Caco-2 (cell line): ENCODE measurements at regions of chr11 and their contacts with region 1.

Region 1: GRCh38 chr11:10792398-10792975 is 16.2 kb downstream of the EIF4G2 start:
- DNase-seq: peak; percentile 93 to 96
- H3K4me3 ChIP-seq: no peak overlapping the region
- H3K4me3 Mint-ChIP-seq: peak overlapping the region; percentile 10
- H3K27ac Mint-ChIP-seq: no peak overlapping the region
- H3K4me1 ChIP-seq: no peaks in the 10 kb centered on the region
- H3K4me1 Mint-ChIP-seq: peaks cover 6% of the 10 kb centered on the region
- H3K27me3 ChIP-seq: no peaks in the 10 kb centered on the region
- H3K27me3 Mint-ChIP-seq: no peaks in the 10 kb centered on the region
- CTCF ChIP-seq: peak; percentile 94 to 99

Region 2: GRCh38 chr11:10750838-10751580 is 41.5 kb before region 1 on chr11 and contains the start of gene CTR9:
- CTCF ChIA-PET with region 1: interaction called, 3 read pairs
- POLR2A ChIA-PET with region 1: interaction called, 3 read pairs
- intact Hi-C with region 1: loop called (anchors 1 kb)
- DNase-seq: peak; percentile 96 to 97
- H3K4me3 ChIP-seq: peak within 1 kb of the TSS; percentile 70
- H3K4me3 Mint-ChIP-seq: peak within 1 kb of the TSS; percentile 91
- H3K27ac Mint-ChIP-seq: peak within 1 kb of the TSS; percentile 90
- H3K4me1 ChIP-seq: peaks cover 13% of the 10 kb centered on the region; the same call in 1 of the 2 replicates
- H3K4me1 Mint-ChIP-seq: peaks cover 6% of the 10 kb centered on the region
- H3K27me3 ChIP-seq: no peaks in the 10 kb centered on the region
- H3K27me3 Mint-ChIP-seq: no peaks in the 10 kb centered on the region
- CTCF ChIP-seq: peak in 1 of 2 experiments; percentile 50
- total RNA-seq, gene CTR9: 51.1 and 54.0 TPM in 2 replicates

Region 3: GRCh38 chr11:10770626-10771254 is 21.7 kb before region 1 on chr11:
- CTCF ChIA-PET with region 1: interaction called, 12 read pairs
- POLR2A ChIA-PET with region 1: no interaction called
- intact Hi-C with region 1: no loop called
- DNase-seq: peak; percentile 59 to 60
- H3K4me3 ChIP-seq: no peak overlapping the region
- H3K4me3 Mint-ChIP-seq: no peak overlapping the region
- H3K27ac Mint-ChIP-seq: no peak overlapping the region
- H3K4me1 ChIP-seq: no peaks in the 10 kb centered on the region
- H3K4me1 Mint-ChIP-seq: no peaks in the 10 kb centered on the region
- H3K27me3 ChIP-seq: no peaks in the 10 kb centered on the region
- H3K27me3 Mint-ChIP-seq: no peaks in the 10 kb centered on the region
- CTCF ChIP-seq: peak; percentile 79 to 86

Region 4: DNA sequence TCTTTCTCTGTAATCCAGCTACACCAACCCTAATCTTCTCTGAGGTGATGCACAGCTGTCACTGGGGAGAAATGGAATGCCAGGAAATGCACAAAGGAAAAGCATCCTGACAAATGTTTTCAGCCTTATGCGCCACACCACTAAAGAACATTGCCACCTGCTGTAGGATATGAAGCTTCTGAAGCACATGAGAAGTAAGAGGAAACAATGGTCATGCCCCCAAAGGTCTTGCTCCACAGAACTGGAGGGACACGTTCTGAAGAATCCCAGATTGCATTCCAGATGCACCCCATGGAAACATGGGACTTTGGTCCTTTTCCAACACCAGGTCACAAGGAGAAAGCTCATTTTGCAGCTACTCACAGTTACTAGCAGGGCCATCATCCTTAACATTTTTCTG is 114.0 kb after region 1 on chr11:
- CTCF ChIA-PET with region 1: interaction called, 7 read pairs
- POLR2A ChIA-PET with region 1: interaction called, 5 read pairs
- intact Hi-C with region 1: loop called (anchors 2 kb)
- DNase-seq: peak; percentile 47 to 59
- H3K4me3 ChIP-seq: no peak overlapping the region
- H3K4me3 Mint-ChIP-seq: no peak overlapping the region
- H3K27ac Mint-ChIP-seq: no peak overlapping the region
- H3K4me1 ChIP-seq: peaks cover 20% of the 10 kb centered on the region
- H3K4me1 Mint-ChIP-seq: peaks cover 26% of the 10 kb centered on the region
- H3K27me3 ChIP-seq: no peaks in the 10 kb centered on the region
- H3K27me3 Mint-ChIP-seq: no peaks in the 10 kb centered on the region
- CTCF ChIP-seq: peak; percentile 13 to 27

Region 5: GRCh38 chr11:11022125-11022730 is 229.7 kb after region 1 on chr11:
- CTCF ChIA-PET with region 1: interaction called, 9 read pairs
- POLR2A ChIA-PET with region 1: no interaction called
- intact Hi-C with region 1: loop called (anchors 2 kb)
- DNase-seq: peak in 1 of 2 experiments; percentile 29
- H3K4me3 ChIP-seq: no peak overlapping the region
- H3K4me3 Mint-ChIP-seq: no peak overlapping the region
- H3K27ac Mint-ChIP-seq: no peak overlapping the region
- H3K4me1 ChIP-seq: no peaks in the 10 kb centered on the region
- H3K4me1 Mint-ChIP-seq: peaks cover 6% of the 10 kb centered on the region
- H3K27me3 ChIP-seq: no peaks in the 10 kb centered on the region
- H3K27me3 Mint-ChIP-seq: no peaks in the 10 kb centered on the region
- CTCF ChIP-seq: peak; percentile 29 to 67

Region 6: DNA sequence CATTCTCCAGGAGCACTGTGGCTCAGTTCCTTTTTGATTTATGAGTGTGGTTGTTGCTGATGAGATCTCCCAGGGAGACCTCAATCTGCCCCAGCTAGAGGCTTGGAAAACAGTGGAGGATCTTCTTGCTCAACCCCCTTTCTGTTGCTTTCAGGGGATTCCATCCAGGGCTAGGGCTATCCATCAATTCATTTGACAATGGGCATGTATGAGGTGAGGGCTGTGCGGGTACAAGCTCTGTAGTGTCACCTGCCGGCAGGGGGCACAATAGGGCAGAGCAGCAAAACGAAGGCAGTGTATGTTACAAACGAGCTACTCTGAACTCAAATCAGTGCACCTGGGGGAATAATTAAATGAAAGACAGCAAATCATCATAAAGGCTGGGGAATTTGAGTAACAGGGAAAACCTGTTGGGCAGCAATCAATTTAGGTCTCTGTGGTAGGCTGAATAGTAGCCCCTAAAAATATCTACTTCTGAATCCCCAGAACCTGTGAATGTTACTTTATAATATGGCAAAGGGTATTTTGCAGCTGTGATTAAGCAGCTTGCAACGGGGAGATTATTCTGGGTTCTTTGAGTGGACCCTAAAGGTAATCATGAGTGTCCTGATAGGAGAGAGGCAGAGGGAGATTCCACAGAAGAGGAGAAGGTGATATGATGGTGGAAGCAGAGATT is 235.7 kb after region 1 on chr11:
- CTCF ChIA-PET with region 1: interaction called, 24 read pairs
- POLR2A ChIA-PET with region 1: no interaction called
- intact Hi-C with region 1: loop called (anchors 2 kb)
- DNase-seq: peak; percentile 74 to 79
- H3K4me3 ChIP-seq: no peak overlapping the region
- H3K4me3 Mint-ChIP-seq: no peak overlapping the region
- H3K27ac Mint-ChIP-seq: no peak overlapping the region
- H3K4me1 ChIP-seq: no peaks in the 10 kb centered on the region
- H3K4me1 Mint-ChIP-seq: no peaks in the 10 kb centered on the region
- H3K27me3 ChIP-seq: no peaks in the 10 kb centered on the region; the same call in 1 of the 2 replicates
- H3K27me3 Mint-ChIP-seq: peaks cover 7% of the 10 kb centered on the region
- CTCF ChIP-seq: peak; percentile 83 to 90